IMR-90 (cell line): ENCODE measurements at regions of chr4 and their contacts with region 1.

Region 1: GRCh38 chr4:36609661-36610060 is 328.2 kb downstream of the DTHD1 start:
- DNase-seq: no peak
- ATAC-seq: no peak
- H3K4me3 ChIP-seq: no peak overlapping the region
- H3K27ac ChIP-seq: no peak overlapping the region
- H3K4me1 ChIP-seq: no peaks in the 10 kb centered on the region
- H3K27me3 ChIP-seq: no peaks in the 10 kb centered on the region
- CTCF ChIP-seq: no peak
- POLR2A ChIP-seq: no peak
- RAD21 ChIP-seq: no peak

Region 2: DNA sequence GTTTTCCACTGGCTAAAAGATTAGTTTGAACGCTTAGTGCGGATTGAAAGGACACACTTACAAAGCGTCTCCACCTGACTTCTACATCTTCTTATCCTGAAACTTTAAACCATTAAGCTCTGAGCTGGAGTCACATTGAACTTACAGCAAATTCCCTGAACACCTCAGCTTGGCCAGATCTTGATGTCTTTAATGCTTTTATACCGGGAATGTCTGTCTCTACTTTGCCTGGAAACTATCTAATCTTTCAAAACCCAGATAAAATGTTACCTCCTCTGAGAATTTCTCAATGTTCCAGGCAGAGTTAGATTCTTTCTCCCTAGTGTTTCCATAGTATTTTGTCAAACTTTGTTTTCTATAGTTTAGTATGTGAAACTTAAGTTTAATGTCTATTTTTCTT is 148.3 kb before region 1 on chr4:
- CTCF ChIA-PET with region 1: no interaction called
- POLR2A ChIA-PET with region 1: no interaction called
- dilution Hi-C with region 1: no loop called
- in situ Hi-C with region 1: no loop called
- intact Hi-C with region 1: no loop called
- DNase-seq: no peak
- ATAC-seq: no peak
- H3K4me3 ChIP-seq: no peak overlapping the region
- H3K27ac ChIP-seq: no peak overlapping the region
- H3K4me1 ChIP-seq: no peaks in the 10 kb centered on the region
- H3K27me3 ChIP-seq: no peaks in the 10 kb centered on the region
- CTCF ChIP-seq: no peak
- POLR2A ChIP-seq: no peak
- RAD21 ChIP-seq: no peak

Region 3: GRCh38 chr4:36508394-36508793 is 101.3 kb before region 1 on chr4:
- CTCF ChIA-PET with region 1: no interaction called
- POLR2A ChIA-PET with region 1: no interaction called
- dilution Hi-C with region 1: no loop called
- in situ Hi-C with region 1: no loop called
- intact Hi-C with region 1: no loop called
- DNase-seq: no peak
- ATAC-seq: no peak
- H3K4me3 ChIP-seq: no peak overlapping the region
- H3K27ac ChIP-seq: no peak overlapping the region
- H3K4me1 ChIP-seq: no peaks in the 10 kb centered on the region
- H3K27me3 ChIP-seq: no peaks in the 10 kb centered on the region
- CTCF ChIP-seq: no peak
- POLR2A ChIP-seq: no peak
- RAD21 ChIP-seq: no peak

Region 4: GRCh38 chr4:36568575-36568974 is 41.1 kb before region 1 on chr4:
- CTCF ChIA-PET with region 1: no interaction called
- POLR2A ChIA-PET with region 1: no interaction called
- dilution Hi-C with region 1: no loop called
- in situ Hi-C with region 1: no loop called
- intact Hi-C with region 1: no loop called
- DNase-seq: no peak
- ATAC-seq: no peak
- H3K4me3 ChIP-seq: no peak overlapping the region
- H3K27ac ChIP-seq: no peak overlapping the region
- H3K4me1 ChIP-seq: no peaks in the 10 kb centered on the region
- H3K27me3 ChIP-seq: no peaks in the 10 kb centered on the region
- CTCF ChIP-seq: no peak
- POLR2A ChIP-seq: no peak
- RAD21 ChIP-seq: no peak

Region 5: GRCh38 chr4:36665985-36666527 is 56.4 kb after region 1 on chr4:
- CTCF ChIA-PET with region 1: no interaction called
- POLR2A ChIA-PET with region 1: no interaction called
- dilution Hi-C with region 1: no loop called
- in situ Hi-C with region 1: no loop called
- intact Hi-C with region 1: loop called (anchors 5 kb)
- DNase-seq: no peak
- ATAC-seq: no peak
- H3K4me3 ChIP-seq: no peak overlapping the region
- H3K27ac ChIP-seq: no peak overlapping the region
- H3K4me1 ChIP-seq: no peaks in the 10 kb centered on the region
- H3K27me3 ChIP-seq: no peaks in the 10 kb centered on the region
- CTCF ChIP-seq: no peak
- POLR2A ChIP-seq: no peak
- RAD21 ChIP-seq: no peak